Endothelial cell of umbilical vein (primary cell): ENCODE measurements at regions of chr5 and their contacts with region 1.

Region 1: DNA sequence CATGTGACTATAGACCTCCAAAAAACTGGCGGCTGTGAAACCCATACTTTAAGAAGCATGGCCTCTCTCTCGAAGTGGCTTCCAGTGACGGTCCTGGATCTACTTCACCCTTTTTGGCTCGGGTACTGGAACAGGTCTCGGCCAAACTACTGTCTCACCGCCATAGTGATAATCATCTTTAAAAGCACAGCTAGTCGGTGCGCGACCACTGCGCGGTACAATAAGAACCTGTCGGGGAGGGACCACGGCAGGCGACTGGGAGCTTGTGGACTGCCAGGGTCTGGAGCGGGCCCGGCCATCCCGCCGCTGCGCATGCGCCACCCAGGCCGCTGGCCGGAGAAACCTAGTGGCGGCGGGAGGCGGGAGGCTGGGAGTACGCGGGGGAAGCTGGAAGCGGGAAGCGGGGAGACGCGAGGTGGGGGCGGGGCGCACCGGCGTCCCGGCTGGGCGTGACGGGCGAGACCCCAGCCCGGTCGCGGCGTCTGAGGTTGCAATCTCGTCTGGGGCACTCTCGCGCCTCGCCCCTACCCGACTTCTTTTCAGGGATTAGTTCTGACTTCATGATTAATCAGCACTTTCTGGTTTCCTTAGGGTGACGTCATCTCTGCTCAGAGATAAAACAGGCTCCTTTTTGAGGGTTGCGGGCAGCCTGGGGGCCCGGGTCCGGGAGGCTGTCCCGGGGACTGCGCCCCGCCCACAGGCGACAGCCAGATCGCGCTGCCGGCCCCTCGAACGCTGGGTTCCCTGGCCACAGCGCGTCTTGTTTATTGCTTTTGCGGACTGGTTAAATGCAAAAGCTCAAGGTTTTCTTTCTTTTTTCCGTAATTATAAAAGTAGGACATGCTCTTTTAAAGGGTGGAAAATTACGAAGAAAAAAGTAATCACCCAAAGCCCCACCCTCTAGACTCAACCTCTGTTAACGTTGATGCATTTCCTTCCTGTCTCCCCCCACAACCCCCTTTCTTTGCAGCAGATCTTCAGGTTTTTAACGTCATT is 266.8 kb downstream of the CWC27 start:
- DNase-seq: peak; percentile 95
- H3K4me3 ChIP-seq: peak overlapping the region; percentile 60 to 69 (median 63)
- H3K27ac ChIP-seq: peak overlapping the region; percentile 97
- H3K4me1 ChIP-seq: peaks cover 23% of the 10 kb centered on the region
- H3K27me3 ChIP-seq: no peaks in the 10 kb centered on the region
- CTCF ChIP-seq: no peak
- POLR2A ChIP-seq: peak; percentile 89

Region 2: DNA sequence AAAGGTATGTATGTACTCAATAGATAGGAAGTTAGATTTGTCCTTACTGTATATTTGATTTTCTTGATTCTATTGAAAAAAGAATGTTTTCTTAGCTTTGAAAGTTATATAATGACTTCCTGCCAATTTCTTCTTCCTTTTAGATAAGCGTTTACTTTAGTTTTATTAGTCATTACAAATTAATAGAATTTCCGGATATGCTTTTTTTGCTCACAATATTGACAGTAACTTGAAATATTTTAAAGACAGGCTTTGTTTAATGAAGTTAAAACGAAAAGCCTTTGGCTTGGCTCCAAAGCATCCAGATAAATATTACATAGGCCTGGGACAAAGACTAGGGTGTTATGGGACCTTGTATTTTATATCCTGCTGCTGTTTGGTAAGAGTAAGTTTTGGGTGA is 217.3 kb before region 1 on chr5:
- CTCF ChIA-PET with region 1: no interaction called
- POLR2A ChIA-PET with region 1: no interaction called
- dilution Hi-C with region 1: no loop called
- intact Hi-C with region 1: loop called (anchors 5 kb)
- DNase-seq: peak; percentile 66
- H3K4me3 ChIP-seq: no peak overlapping the region
- H3K27ac ChIP-seq: no peak overlapping the region
- H3K4me1 ChIP-seq: peaks cover 31% of the 10 kb centered on the region
- H3K27me3 ChIP-seq: no peaks in the 10 kb centered on the region
- CTCF ChIP-seq: no peak
- POLR2A ChIP-seq: no peak

Region 3: GRCh38 chr5:64831996-64832395 is 203.5 kb before region 1 on chr5:
- CTCF ChIA-PET with region 1: no interaction called
- POLR2A ChIA-PET with region 1: no interaction called
- dilution Hi-C with region 1: no loop called
- intact Hi-C with region 1: no loop called
- DNase-seq: no peak
- H3K4me3 ChIP-seq: no peak overlapping the region
- H3K27ac ChIP-seq: no peak overlapping the region
- H3K4me1 ChIP-seq: peaks cover 18% of the 10 kb centered on the region
- H3K27me3 ChIP-seq: no peaks in the 10 kb centered on the region
- CTCF ChIP-seq: no peak
- POLR2A ChIP-seq: no peak

Region 4: DNA sequence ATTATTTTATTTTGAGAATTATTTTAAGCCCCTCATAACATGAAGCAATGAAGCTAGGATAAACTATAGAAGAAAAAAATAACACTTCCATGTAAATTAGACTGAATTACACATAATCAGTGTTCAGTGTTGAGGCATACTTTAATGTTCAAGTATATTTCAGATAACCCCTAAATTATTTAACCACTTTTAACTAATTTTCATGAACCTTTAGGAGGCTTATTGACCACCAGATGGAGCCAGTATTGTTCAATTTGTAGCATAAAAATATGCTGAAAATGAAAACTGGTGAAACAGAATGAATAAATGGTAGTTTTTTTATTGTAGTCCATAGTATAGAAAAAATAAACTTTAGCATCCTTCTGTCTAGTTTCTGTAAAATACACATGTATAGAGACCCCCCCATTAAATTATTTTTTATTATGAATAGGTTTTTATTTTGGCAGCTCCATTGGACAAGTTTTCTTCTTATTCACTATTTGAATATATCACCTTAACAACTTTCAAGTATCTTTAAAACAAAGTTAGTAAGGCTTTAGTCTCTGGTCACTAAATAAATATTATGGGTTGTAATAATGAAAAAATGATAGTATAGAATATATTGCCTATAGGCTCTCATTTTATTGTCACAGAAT is 76.6 kb before region 1 on chr5:
- CTCF ChIA-PET with region 1: no interaction called
- POLR2A ChIA-PET with region 1: no interaction called
- dilution Hi-C with region 1: no loop called
- intact Hi-C with region 1: no loop called
- DNase-seq: peak; percentile 43
- H3K4me3 ChIP-seq: no peak overlapping the region
- H3K27ac ChIP-seq: no peak overlapping the region
- H3K4me1 ChIP-seq: no peaks in the 10 kb centered on the region
- H3K27me3 ChIP-seq: no peaks in the 10 kb centered on the region
- CTCF ChIP-seq: peak; percentile 27 to 39
- POLR2A ChIP-seq: no peak